Activated B cell treated with CpG ODN at 0.5 μM for 24 hours (primary cell): ENCODE measurements at regions of chr1 and their contacts with region 1.

Region 1: GRCh38 chr1:3530926-3531818 is 76.7 kb downstream of the ARHGEF16 start:
- DNase-seq: peak; percentile 63
- ATAC-seq: peak; percentile 84
- H3K4me3 Mint-ChIP-seq: peak overlapping the region; percentile 76
- H3K27ac Mint-ChIP-seq: peak overlapping the region; percentile 65
- H3K4me1 Mint-ChIP-seq: peaks cover 15% of the 10 kb centered on the region
- H3K27me3 Mint-ChIP-seq: no peaks in the 10 kb centered on the region
- CTCF ChIP-seq: no peak

Region 2: DNA sequence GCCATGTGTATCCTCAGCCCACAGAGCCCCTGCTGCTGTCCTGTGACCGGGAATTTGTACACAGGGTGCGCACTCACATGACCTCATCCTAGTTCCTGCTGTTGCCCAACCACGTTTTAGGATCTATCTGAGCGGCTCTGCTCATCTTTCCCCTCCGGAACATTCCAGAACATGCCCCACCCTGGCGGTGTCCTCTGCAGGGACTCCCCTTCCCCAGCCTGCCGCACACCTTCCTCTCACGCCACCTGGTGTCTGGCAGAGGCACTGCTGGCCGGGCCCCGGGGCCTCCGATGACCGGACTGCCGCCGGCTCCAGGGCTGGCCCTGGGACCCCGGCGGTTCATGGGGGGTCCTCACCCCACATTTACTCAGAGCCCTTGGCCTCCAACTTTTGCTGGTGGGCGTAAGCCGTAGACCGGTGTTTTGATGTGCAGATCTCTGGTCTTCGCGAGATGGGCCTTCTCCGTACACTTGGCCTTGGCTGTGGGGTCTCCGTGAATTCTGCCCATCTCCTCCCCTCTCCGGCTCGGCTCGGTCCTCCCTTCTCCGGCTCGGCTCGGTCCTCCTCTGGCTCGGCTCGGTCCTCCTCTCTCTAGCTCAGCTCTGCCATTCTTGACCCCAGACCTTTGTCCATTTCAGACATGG is 47.2 kb before region 1 on chr1:
- CTCF ChIA-PET with region 1: no interaction called
- POLR2A ChIA-PET with region 1: no interaction called
- intact Hi-C with region 1: no loop called
- DNase-seq: peak; percentile 44
- ATAC-seq: peak; percentile 60
- H3K4me3 Mint-ChIP-seq: no peak overlapping the region
- H3K27ac Mint-ChIP-seq: no peak overlapping the region
- H3K4me1 Mint-ChIP-seq: no peaks in the 10 kb centered on the region
- H3K27me3 Mint-ChIP-seq: peaks cover 4% of the 10 kb centered on the region
- CTCF ChIP-seq: no peak

Region 3: DNA sequence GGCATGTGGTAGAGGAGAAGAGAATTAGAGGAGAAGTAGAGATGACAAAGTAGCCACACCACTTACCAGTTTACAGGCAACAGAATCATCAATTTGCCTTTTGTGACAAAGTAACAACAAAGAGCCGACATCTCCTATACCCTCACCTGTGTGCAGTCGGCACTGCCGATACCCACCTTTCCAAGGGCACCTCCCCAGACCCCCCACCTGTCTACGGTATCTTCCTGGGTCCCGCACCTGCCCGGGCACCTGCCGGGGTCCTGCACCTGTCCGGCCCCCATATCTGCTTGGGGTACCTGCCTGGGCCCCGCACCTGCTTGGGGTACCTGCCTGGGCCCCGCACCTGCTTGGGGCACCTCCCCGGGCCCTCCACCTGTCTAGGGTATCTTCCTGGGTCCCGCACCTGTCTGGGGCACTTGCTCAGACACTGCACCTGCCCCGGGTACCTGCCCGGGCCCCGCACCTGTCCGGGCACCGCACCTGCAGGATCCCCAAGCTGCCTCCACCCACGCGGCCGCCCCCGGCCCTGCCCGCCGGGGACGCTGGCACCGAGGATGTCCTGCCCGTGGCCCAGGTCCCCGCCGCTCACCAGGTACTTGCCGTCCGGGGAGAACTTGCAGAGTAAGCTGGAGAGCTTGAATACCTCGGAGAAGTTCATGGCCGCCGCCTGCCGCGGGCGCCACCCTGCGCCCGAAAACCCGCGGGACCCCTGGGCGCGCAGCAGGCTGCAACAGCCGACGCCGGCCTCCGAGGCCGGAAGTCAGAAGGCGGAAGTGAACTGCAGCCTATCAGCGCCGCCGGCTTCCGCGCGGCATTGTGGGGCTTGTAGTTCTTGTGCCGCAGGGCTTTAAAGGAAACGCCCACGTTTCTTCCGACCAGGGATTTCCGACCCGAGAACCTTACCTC is 118.4 kb after region 1 on chr1 and contains the start of gene WRAP73:
- CTCF ChIA-PET with region 1: no interaction called
- POLR2A ChIA-PET with region 1: no interaction called
- intact Hi-C with region 1: loop called (anchors 1 kb)
- DNase-seq: peak; percentile 84
- ATAC-seq: peak; percentile 97
- H3K4me3 Mint-ChIP-seq: peak within 1 kb of the TSS; percentile 82
- H3K27ac Mint-ChIP-seq: no peak within 1 kb of the TSS
- H3K4me1 Mint-ChIP-seq: peaks cover 29% of the 10 kb centered on the region
- H3K27me3 Mint-ChIP-seq: peaks cover 16% of the 10 kb centered on the region
- CTCF ChIP-seq: no peak
- total RNA-seq, gene WRAP73: 27.0 and 30.1 TPM in 2 replicates

Region 4: GRCh38 chr1:3856908-3857790 is 326.0 kb after region 1 on chr1 and contains the starts of genes CEP104 and DFFB:
- CTCF ChIA-PET with region 1: no interaction called
- POLR2A ChIA-PET with region 1: no interaction called
- intact Hi-C with region 1: loop called (anchors 2 kb)
- DNase-seq: peak; percentile 99
- ATAC-seq: peak; percentile 97
- H3K4me3 Mint-ChIP-seq: peak within 1 kb of the TSS; percentile 95
- H3K27ac Mint-ChIP-seq: peak within 1 kb of the TSS; percentile 86
- H3K4me1 Mint-ChIP-seq: peaks cover 31% of the 10 kb centered on the region
- H3K27me3 Mint-ChIP-seq: no peaks in the 10 kb centered on the region
- CTCF ChIP-seq: no peak
- total RNA-seq, gene CEP104: 38.0 and 45.1 TPM in 2 replicates
- total RNA-seq, gene DFFB: 9.3 and 10.5 TPM in 2 replicates

Region 5: DNA sequence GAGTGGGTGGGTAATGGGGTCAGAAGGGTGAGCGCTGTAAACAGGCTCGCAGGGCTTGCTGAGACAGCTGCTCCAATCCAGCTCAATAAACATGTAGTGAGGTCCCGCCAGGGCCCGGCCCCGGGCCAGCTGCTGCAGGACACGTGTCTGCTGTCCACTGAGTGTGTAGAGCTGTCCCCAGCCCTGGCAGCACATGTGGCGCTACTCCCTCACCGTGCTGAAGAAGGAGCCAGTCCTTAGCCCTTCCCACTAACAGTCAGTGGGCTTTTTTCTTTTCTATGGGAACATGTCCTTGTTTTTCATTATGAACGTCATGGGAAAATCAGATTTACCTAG is 447.8 kb after region 1 on chr1:
- CTCF ChIA-PET with region 1: no interaction called
- POLR2A ChIA-PET with region 1: no interaction called
- intact Hi-C with region 1: no loop called
- DNase-seq: no peak
- ATAC-seq: no peak
- H3K4me3 Mint-ChIP-seq: no peak overlapping the region
- H3K27ac Mint-ChIP-seq: no peak overlapping the region
- H3K4me1 Mint-ChIP-seq: no peaks in the 10 kb centered on the region
- H3K27me3 Mint-ChIP-seq: peaks cover 7% of the 10 kb centered on the region
- CTCF ChIP-seq: no peak